ENCODE measurements at regions of chr17 and their contacts with region 1.

Region 1: DNA sequence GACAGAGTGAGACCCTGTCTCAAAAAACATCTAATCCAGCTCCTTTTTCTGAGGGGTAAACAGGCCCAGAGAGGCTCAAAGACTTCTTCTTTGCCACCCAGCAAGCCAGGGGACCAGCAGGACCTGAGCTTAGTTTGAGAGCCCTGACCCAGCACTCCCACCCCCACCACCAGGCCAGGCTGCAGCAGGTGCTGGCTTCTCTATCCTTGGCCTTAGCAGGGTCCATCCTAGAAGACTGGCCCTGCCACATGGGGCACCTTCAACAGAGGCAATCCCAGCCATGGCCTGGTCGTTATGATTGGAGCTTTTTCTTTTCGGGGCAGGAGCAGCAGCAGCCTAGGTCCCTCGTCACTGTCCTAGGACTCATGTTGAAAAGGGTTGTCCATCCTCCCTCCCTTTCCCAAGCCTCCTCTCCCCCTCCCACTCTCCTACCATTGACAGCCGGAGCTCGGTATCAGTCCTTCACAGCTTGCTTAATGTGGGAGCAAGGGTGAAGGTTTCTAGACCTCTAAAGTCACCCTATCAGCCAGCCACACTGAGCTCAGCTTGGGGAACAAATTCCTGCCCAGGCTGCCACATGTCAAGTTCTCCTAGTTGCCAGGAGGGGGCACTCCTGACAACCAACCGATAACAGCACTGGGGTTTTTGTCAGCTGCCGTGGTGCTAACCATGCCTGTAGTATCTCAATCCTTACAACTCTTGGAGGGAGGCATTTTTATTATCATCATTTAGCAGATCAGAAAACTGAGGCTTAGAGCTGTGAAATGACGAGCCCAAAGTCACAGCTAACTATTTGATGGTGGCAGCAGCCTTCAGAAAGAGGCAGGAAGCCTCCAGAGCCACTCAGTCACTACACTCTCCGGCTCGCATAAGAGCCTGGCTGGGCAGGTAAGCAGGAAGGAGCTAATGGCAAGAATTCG is 11.2 kb downstream of the MRPL27 start:
- DNase-seq: peak in 1 of 2 donors; percentile 47
- ATAC-seq: peak in 6 of 8 donors; percentile 40 to 72 (median 60)
- H3K4me3 ChIP-seq: no peak overlapping the region
- H3K27ac ChIP-seq: peak overlapping the region in 1 of 10 donors; percentile 26
- H3K4me1 ChIP-seq: peaks cover 0 to 44% (median 10%) of the 10 kb centered on the region in 9 donors
- H3K27me3 ChIP-seq: no peaks in the 10 kb centered on the region
- CTCF ChIP-seq: peak; percentile 51 to 77 (median 71)

Region 2: DNA sequence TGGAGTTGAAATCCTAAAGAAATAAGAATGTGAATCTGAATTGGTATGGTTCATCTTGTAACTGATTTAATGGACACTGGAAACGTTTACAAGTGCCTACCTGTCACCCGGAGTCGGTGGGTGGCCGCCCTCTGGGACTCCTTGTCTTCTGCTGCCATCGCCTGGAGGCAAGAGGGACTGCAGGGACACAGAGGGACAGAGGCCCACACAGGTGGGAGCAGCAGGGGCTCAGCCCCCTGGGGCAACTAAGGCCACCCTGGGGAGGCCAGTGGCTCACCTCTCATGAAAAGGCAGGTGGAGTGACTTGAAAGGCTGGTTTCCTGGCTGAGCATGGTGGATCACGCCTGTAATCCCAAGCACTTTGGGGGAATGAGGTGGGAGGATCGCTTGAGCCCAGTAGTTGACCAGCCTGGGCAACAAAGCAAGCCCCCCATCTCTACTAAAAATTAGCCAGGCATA is 64.4 kb before region 1 on chr17:
- intact Hi-C with region 1: no loop called
- DNase-seq: peak; percentile 71 to 77
- ATAC-seq: peak; percentile 81 to 96 (median 92)
- H3K4me3 ChIP-seq: no peak overlapping the region
- H3K27ac ChIP-seq: no peak overlapping the region
- H3K4me1 ChIP-seq: peaks cover 0 to 3% (median 0%) of the 10 kb centered on the region in 9 donors
- H3K27me3 ChIP-seq: no peaks in the 10 kb centered on the region
- CTCF ChIP-seq: peak; percentile 83 to 98 (median 95)

Region 3: GRCh38 chr17:50468409-50469207 is 106.8 kb after region 1 on chr17 and contains the start of gene CHAD:
- intact Hi-C with region 1: loop called in 2 of 10 experiments (anchors 10 kb)
- DNase-seq: no peak
- ATAC-seq: peak in 6 of 8 donors; percentile 7 to 44 (median 30)
- H3K4me3 ChIP-seq: peak within 1 kb of the TSS in 9 of 10 donors; percentile 29 to 53 (median 39)
- H3K27ac ChIP-seq: no peak within 1 kb of the TSS
- H3K4me1 ChIP-seq: peaks cover 3 to 16% (median 13%) of the 10 kb centered on the region in 9 donors
- H3K27me3 ChIP-seq: peaks cover 10 to 30% (median 24%) of the 10 kb centered on the region in 7 donors
- CTCF ChIP-seq: no peak
- total RNA-seq, gene CHAD: 0.13 to 0.74 (median 0.20) TPM in 3 of 10 donors, not detected in the others